Motor neuron (in vitro differentiated cells): ENCODE measurements at regions of chr1 and their contacts with region 1.

Region 1: GRCh38 chr1:65658122-65658521 is 134.6 kb upstream of the PDE4B start:
- ATAC-seq: peak in 1 of 8 experiments; percentile 54
- H3K4me3 ChIP-seq: no peak overlapping the region
- H3K27ac ChIP-seq: no peak overlapping the region
- H3K4me1 ChIP-seq: no peaks in the 10 kb centered on the region

Region 2: DNA sequence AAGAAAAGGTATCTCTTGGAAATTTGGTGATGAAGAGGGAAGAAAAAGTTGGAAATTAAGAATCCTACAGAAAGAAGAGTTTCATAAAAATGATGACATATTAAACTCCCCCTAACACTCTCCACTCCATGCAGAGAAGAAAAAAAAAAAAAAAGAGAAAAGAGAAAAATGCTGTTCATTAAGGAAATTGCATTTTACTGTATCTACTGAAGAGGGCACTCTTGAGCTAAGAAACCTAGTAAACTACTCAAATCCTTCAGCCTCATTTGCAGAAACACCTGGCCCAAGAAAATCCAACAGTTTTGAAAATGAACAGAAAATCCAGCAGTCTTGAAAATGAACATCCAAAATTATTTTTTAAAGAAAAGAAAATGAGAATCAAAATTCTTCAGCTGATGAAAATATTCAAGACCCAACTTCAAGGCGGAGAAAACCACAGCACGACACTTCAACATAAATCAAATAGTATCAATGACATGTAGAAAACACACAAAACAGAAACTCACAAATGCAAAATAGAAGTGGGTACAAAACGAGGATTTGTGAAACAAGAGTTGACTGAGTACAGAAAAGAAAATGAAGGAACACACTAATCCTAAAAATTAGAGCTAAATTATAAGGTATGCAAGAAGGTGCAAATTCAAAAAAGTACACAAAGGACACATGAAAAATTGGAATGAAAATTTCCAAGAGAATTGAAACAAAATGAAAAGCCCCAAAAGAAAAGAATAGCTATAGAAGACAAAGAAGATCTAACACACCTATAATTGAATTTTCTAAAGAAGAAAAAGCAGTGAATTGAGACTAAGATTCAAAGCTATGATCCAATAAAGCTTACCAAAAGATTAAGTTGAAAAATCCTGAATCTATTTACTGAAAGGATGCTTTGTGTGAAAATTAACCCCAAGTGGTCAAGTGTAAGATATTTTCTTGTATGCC is 422.0 kb before region 1 on chr1:
- in situ Hi-C with region 1: loop called in 1 of 9 experiments (anchors 25 kb)
- ATAC-seq: peak in 2 of 8 experiments; percentile 29 to 38
- H3K4me3 ChIP-seq: no peak overlapping the region
- H3K27ac ChIP-seq: no peak overlapping the region
- H3K4me1 ChIP-seq: peaks cover 0 to 4% of the 10 kb centered on the region in 2 donors

Region 3: GRCh38 chr1:65431111-65431705 is 226.9 kb before region 1 on chr1:
- in situ Hi-C with region 1: loop called in 1 of 9 experiments (anchors 25 kb)
- ATAC-seq: peak in 2 of 8 experiments; percentile 28 to 45
- H3K4me3 ChIP-seq: no peak overlapping the region
- H3K27ac ChIP-seq: no peak overlapping the region
- H3K4me1 ChIP-seq: no peaks in the 10 kb centered on the region

Region 4: GRCh38 chr1:65939636-65940035 is 281.5 kb after region 1 on chr1:
- in situ Hi-C with region 1: no loop called
- ATAC-seq: no peak
- H3K4me3 ChIP-seq: no peak overlapping the region
- H3K27ac ChIP-seq: no peak overlapping the region
- H3K4me1 ChIP-seq: peaks cover 0 to 7% of the 10 kb centered on the region in 2 donors